HepG2 (cell line): ENCODE measurements at regions of chr15 and their contacts with region 1.

Region 1: DNA sequence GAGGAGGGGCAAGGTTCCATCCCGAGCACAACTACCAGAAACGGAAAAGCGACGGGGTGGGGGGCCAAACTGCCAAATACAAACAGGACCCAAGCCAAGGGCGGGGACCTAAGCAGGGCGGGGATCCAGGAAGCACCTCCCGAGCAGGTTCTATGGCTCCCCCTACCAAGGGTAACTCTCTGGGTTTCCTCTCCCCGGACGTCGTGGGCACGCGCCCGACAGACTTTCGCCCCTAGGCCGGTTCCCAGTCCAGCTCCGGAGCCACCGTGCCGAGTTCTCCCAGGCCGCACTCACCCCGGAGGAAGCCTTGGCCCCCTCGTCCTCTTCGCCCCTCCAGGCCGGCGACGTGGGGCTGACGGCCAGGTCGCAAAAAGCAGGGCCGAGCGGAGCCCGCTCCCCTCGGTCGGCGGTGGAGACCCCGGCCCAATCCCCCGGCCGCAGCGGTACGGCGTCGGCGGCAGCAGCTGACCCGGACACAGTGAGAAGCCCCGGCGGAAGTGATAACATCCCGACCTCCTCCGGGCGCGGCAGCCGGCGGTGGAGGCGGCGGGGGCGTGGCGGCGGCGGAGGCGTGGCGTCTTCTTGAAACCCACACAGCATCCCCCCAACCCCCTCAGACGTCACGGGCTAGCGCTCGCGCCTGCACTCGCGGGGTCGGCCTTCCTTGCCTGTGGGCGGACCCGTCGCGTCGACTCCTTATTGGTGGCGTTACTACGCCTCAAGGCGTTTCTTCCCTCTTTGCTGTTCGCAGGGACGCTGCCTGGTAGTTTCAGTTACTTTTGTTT is at the start of gene BNIP2:
- DNase-seq: peak; percentile 93
- ATAC-seq: peak; percentile 94
- H3K4me3 ChIP-seq: peak within 1 kb of the TSS; percentile 79 to 98 (median 94)
- H3K27ac ChIP-seq: peak within 1 kb of the TSS; percentile 98
- H3K4me1 ChIP-seq: peaks cover 53% of the 10 kb centered on the region
- H3K27me3 ChIP-seq: no peaks in the 10 kb centered on the region; a peak in 2 of 5 replicates
- CTCF ChIP-seq: peak; percentile 54
- EP300 ChIP-seq: no peak
- POLR2A ChIP-seq: peak; percentile 59 to 80
- RAD21 ChIP-seq: peak; percentile 34; the same call in 1 of the 2 replicates
- total RNA-seq, gene BNIP2: 55.1 and 57.6 TPM in 2 replicates

Region 2: DNA sequence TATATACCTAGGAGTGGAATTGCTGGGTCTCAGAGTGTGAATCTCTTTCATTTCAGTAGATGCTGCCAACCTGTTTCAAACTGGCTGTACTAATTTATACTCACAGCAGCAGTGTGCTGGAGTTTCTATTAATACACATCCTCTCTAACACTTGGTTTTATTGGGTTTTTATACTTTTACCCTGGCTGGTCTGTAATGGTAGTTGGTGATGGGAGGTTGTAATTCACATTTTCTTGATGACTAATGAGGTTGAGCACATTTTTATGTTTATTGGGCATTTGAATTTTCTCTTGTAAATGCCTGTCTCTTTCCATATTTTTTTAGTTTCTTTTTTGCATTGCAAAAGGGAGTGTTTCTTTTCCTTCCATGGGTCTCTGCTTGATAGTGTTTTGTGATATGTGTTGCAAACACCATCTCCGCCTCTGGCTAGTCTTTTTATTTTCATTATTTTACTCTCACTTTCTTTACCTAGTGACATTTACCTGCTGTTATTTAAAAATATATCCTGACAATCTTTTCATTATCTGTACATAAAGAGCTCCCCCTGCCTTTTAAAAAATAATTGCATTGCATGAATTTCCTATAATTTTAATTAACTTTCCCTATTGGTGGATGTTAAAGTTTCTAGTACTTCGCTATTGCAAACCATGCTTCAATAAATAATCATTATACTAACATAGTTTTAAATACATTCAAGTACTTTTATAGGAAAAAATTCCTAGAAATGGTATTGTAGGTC is 126.4 kb before region 1 on chr15:
- CTCF ChIA-PET with region 1: no interaction called
- POLR2A ChIA-PET with region 1: no interaction called
- in situ Hi-C with region 1: no loop called
- intact Hi-C with region 1: no loop called
- DNase-seq: no peak
- ATAC-seq: no peak
- H3K4me3 ChIP-seq: no peak overlapping the region
- H3K27ac ChIP-seq: no peak overlapping the region
- H3K4me1 ChIP-seq: 0 out of 2 replicates have a peak, but pooled peaks cover 5% of the 10 kb centered on the region
- H3K27me3 ChIP-seq: no peaks in the 10 kb centered on the region; a peak in 1 of 5 replicates
- CTCF ChIP-seq: no peak
- EP300 ChIP-seq: no peak
- POLR2A ChIP-seq: no peak
- RAD21 ChIP-seq: no peak

Region 3: GRCh38 chr15:59656897-59657634 is 32.0 kb before region 1 on chr15 and contains the start of gene GTF2A2:
- CTCF ChIA-PET with region 1: no interaction called
- POLR2A ChIA-PET with region 1: interaction called, 17 read pairs
- in situ Hi-C with region 1: no loop called
- intact Hi-C with region 1: no loop called
- DNase-seq: peak; percentile 85
- ATAC-seq: peak; percentile 100
- H3K4me3 ChIP-seq: peak within 1 kb of the TSS; percentile 90 to 96 (median 96)
- H3K27ac ChIP-seq: peak within 1 kb of the TSS; percentile 80
- H3K4me1 ChIP-seq: peaks cover 38% of the 10 kb centered on the region
- H3K27me3 ChIP-seq: no peaks in the 10 kb centered on the region
- CTCF ChIP-seq: no peak
- EP300 ChIP-seq: no peak
- POLR2A ChIP-seq: peak; percentile 83 to 85
- RAD21 ChIP-seq: no peak
- total RNA-seq, gene GTF2A2: 106 and 118 TPM in 2 replicates

Region 4: DNA sequence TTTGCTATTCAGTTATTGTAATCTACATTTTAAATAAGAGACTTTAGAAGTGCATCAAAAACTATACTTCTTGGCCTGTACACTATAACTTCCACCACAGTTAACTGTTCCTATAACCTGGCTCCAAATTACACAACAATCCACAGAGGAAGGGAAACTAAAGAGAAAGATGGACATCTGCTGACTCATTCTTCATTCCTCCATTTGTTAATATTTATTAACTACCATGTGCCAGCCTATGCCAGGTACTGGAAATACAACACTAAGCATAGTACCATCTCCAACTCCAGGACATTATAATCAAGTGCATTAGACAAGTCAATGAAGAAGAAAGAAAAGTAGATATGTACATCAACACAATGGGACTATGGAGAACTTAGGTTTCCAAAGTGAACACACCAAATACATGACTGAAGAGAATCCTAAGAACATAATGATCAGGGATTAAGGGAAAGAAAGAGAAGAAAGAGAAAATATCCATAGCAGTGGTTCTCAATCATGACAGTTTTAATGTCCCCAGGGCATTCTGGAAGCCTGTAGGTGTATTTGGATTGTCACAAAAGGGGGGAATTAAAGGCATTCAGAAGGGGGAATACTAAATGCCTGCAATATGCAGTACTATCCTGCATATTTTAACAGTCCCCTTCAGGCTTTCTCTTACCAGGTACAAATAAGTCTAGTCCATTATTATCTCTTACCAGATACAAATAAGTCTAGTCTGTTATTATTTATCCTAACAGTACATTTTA is 781.0 kb after region 1 on chr15:
- CTCF ChIA-PET with region 1: no interaction called
- POLR2A ChIA-PET with region 1: no interaction called
- in situ Hi-C with region 1: loop called (anchors 25 kb)
- intact Hi-C with region 1: no loop called
- DNase-seq: peak; percentile 21
- ATAC-seq: no peak
- H3K4me3 ChIP-seq: no peak overlapping the region
- H3K27ac ChIP-seq: no peak overlapping the region
- H3K4me1 ChIP-seq: peaks cover 21% of the 10 kb centered on the region
- H3K27me3 ChIP-seq: no peaks in the 10 kb centered on the region
- CTCF ChIP-seq: no peak
- EP300 ChIP-seq: no peak
- POLR2A ChIP-seq: no peak
- RAD21 ChIP-seq: no peak

Region 5: DNA sequence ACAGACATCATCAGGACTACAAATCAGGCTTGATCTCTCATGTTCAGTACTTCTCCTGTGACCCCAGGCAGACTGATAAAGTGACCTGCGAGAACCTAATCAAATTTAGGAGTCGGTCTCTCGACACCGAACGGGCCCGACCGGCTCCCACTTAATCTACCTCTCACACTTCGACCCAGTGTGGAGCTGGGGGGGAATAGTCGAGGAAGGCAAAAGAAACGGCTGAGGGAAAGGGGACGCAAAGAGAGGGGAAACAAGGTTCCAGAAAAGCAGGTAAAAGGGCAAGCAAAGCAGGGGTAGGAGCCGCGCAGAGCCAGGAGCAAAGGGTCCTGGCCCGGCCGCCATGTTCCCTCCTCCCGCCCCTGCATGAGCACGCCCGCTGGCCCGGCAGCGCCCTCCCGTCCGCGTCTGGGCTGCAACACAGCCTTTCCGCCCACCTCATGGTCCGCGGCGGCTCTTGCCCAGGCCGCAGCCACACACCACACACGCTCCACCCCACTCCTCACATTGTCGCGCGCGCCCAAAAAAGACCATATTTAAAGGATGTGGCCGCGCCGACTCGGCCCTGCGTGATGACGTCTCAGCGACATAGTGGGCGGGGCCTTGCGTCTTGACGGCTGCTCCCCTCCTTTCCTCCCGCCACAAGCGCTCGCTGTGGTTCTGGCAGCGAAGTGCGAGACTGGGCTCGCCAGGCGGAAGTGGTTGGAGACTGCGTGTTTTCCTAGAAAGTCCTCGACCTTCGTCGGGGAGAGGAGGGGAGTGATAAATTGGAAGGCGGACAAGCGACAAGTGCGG is 789.7 kb after region 1 on chr15 and contains the start of gene ICE2:
- CTCF ChIA-PET with region 1: no interaction called
- POLR2A ChIA-PET with region 1: no interaction called
- in situ Hi-C with region 1: loop called (anchors 25 kb)
- intact Hi-C with region 1: loop called (anchors 2 kb)
- DNase-seq: peak; percentile 89
- ATAC-seq: peak; percentile 94
- H3K4me3 ChIP-seq: peak within 1 kb of the TSS; percentile 67 to 94 (median 90)
- H3K27ac ChIP-seq: peak within 1 kb of the TSS; percentile 93
- H3K4me1 ChIP-seq: peaks cover 43% of the 10 kb centered on the region
- H3K27me3 ChIP-seq: no peaks in the 10 kb centered on the region; a peak in 1 of 5 replicates
- CTCF ChIP-seq: peak; percentile 57
- EP300 ChIP-seq: no peak
- POLR2A ChIP-seq: peak; percentile 92 to 95
- RAD21 ChIP-seq: no peak; the same call in none of the 2 replicates
- total RNA-seq, gene ICE2: 26.4 and 40.9 TPM in 2 replicates